ENCODE measurements at regions of chrX and their contacts with region 1.

Region 1: GRCh38 chrX:65677954-65678469 is 10.6 kb downstream of the MSN start:
- DNase-seq: no peak
- ATAC-seq: no peak
- H3K4me3 ChIP-seq: peak overlapping the region; percentile 17; the same call in 1 of the 2 replicates
- H3K27ac ChIP-seq: peak overlapping the region; percentile 18; the same call in 1 of the 2 replicates
- H3K4me1 ChIP-seq: peaks cover 11% of the 10 kb centered on the region
- H3K27me3 ChIP-seq: no peaks in the 10 kb centered on the region
- CTCF ChIP-seq: no peak
- EP300 ChIP-seq: no peak
- POLR2A ChIP-seq: no peak
- RAD21 ChIP-seq: no peak

Region 2: GRCh38 chrX:65697915-65698796 is 20.1 kb after region 1 on chrX:
- CTCF ChIA-PET with region 1: interaction called, 12 read pairs
- POLR2A ChIA-PET with region 1: interaction called, 3 read pairs
- RAD21 ChIA-PET with region 1: interaction called, 109 read pairs
- SMC1A ChIA-PET with region 1: interaction called, 25 read pairs
- in situ Hi-C with region 1: no loop called
- intact Hi-C with region 1: no loop called
- DNase-seq: peak; percentile 83
- ATAC-seq: peak; percentile 72
- H3K4me3 ChIP-seq: peak overlapping the region; percentile 10; the same call in 1 of the 2 replicates
- H3K27ac ChIP-seq: peak overlapping the region; percentile 87
- H3K4me1 ChIP-seq: peaks cover 59% of the 10 kb centered on the region
- H3K27me3 ChIP-seq: no peaks in the 10 kb centered on the region
- CTCF ChIP-seq: no peak
- EP300 ChIP-seq: peak; percentile 12 to 54; a peak in 1 of 4 replicates
- POLR2A ChIP-seq: peak; percentile 55; the same call in 1 of the 2 replicates
- RAD21 ChIP-seq: no peak